HepG2 (cell line): ENCODE measurements at regions of chr1 and their contacts with region 1.

Region 1: GRCh38 chr1:50271968-50272578 is 151.2 kb downstream of the DMRTA2 start:
- DNase-seq: peak; percentile 15
- ATAC-seq: peak; percentile 93
- H3K4me3 ChIP-seq: no peak overlapping the region
- H3K27ac ChIP-seq: no peak overlapping the region
- H3K4me1 ChIP-seq: no peaks in the 10 kb centered on the region
- H3K27me3 ChIP-seq: no peaks in the 10 kb centered on the region
- CTCF ChIP-seq: peak; percentile 71
- EP300 ChIP-seq: no peak
- POLR2A ChIP-seq: no peak
- RAD21 ChIP-seq: 0 out of 2 replicates have a peak, but pooled peaks have one; percentile 31

Region 2: GRCh38 chr1:50109647-50110075 is 162.4 kb before region 1 on chr1:
- CTCF ChIA-PET with region 1: no interaction called
- POLR2A ChIA-PET with region 1: no interaction called
- in situ Hi-C with region 1: no loop called
- intact Hi-C with region 1: loop called (anchors 10 kb)
- DNase-seq: no peak
- ATAC-seq: no peak
- H3K4me3 ChIP-seq: no peak overlapping the region
- H3K27ac ChIP-seq: no peak overlapping the region
- H3K4me1 ChIP-seq: no peaks in the 10 kb centered on the region
- H3K27me3 ChIP-seq: peaks cover 0 to 13% of the 10 kb centered on the region in 2 experiments; a peak in 3 of 5 replicates
- CTCF ChIP-seq: no peak
- EP300 ChIP-seq: no peak
- POLR2A ChIP-seq: no peak
- RAD21 ChIP-seq: no peak